ENCODE measurements at regions of chr2 and their contacts with region 1.

Region 1: GRCh38 chr2:112749755-112750559 is 14.5 kb downstream of the CKAP2L start:
- DNase-seq: peak; percentile 92
- ATAC-seq: peak; percentile 85
- H3K4me3 Mint-ChIP-seq: no peak overlapping the region
- H3K27ac Mint-ChIP-seq: no peak overlapping the region
- H3K4me1 Mint-ChIP-seq: peaks cover 12% of the 10 kb centered on the region
- H3K27me3 Mint-ChIP-seq: no peaks in the 10 kb centered on the region

Region 2: DNA sequence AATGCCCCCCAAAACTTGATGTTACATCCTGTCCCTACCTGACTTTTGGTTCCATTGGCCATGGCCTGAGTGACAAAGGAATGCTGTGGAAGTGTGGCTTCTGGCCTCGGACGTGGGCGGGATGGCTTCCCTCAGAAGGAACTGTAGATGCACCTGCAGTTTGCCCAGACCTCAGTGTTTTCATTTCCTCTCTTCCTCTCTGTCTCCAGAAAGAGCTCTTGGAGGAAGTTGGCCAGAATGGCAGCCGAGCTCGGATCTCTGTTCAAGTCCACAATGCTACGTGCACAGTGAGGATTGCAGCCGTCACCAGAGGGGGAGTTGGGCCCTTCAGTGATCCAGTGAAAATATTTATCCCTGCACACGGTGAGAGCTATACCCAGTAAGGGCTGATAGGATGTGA is 755.9 kb before region 1 on chr2:
- CTCF ChIA-PET with region 1: no interaction called
- POLR2A ChIA-PET with region 1: no interaction called
- intact Hi-C with region 1: no loop called
- DNase-seq: no peak
- ATAC-seq: no peak
- H3K4me3 Mint-ChIP-seq: no peak overlapping the region
- H3K27ac Mint-ChIP-seq: no peak overlapping the region
- H3K4me1 Mint-ChIP-seq: no peaks in the 10 kb centered on the region
- H3K27me3 Mint-ChIP-seq: no peaks in the 10 kb centered on the region

Region 3: GRCh38 chr2:112660138-112660537 is 89.8 kb before region 1 on chr2:
- CTCF ChIA-PET with region 1: no interaction called
- POLR2A ChIA-PET with region 1: no interaction called
- intact Hi-C with region 1: no loop called
- DNase-seq: no peak
- ATAC-seq: no peak
- H3K4me3 Mint-ChIP-seq: no peak overlapping the region
- H3K27ac Mint-ChIP-seq: peak overlapping the region; percentile 32
- H3K4me1 Mint-ChIP-seq: peaks cover 52% of the 10 kb centered on the region
- H3K27me3 Mint-ChIP-seq: no peaks in the 10 kb centered on the region

Region 4: GRCh38 chr2:112714836-112715631 is 34.9 kb before region 1 on chr2:
- CTCF ChIA-PET with region 1: no interaction called
- POLR2A ChIA-PET with region 1: no interaction called
- intact Hi-C with region 1: no loop called
- DNase-seq: no peak
- ATAC-seq: no peak
- H3K4me3 Mint-ChIP-seq: no peak overlapping the region
- H3K27ac Mint-ChIP-seq: no peak overlapping the region
- H3K4me1 Mint-ChIP-seq: peaks cover 9% of the 10 kb centered on the region
- H3K27me3 Mint-ChIP-seq: peaks cover 3% of the 10 kb centered on the region

Region 5: GRCh38 chr2:112737542-112738232 is 12.3 kb before region 1 on chr2:
- CTCF ChIA-PET with region 1: interaction called, 35 read pairs
- POLR2A ChIA-PET with region 1: no interaction called
- intact Hi-C with region 1: no loop called
- DNase-seq: no peak
- ATAC-seq: no peak
- H3K4me3 Mint-ChIP-seq: no peak overlapping the region
- H3K27ac Mint-ChIP-seq: no peak overlapping the region
- H3K4me1 Mint-ChIP-seq: peaks cover 4% of the 10 kb centered on the region
- H3K27me3 Mint-ChIP-seq: no peaks in the 10 kb centered on the region

Region 6: GRCh38 chr2:112784199-112785189 is 34.5 kb after region 1 on chr2 and contains the start of gene IL1A:
- CTCF ChIA-PET with region 1: interaction called, 17 read pairs
- POLR2A ChIA-PET with region 1: no interaction called
- intact Hi-C with region 1: no loop called
- DNase-seq: peak; percentile 28
- ATAC-seq: peak; percentile 71
- H3K4me3 Mint-ChIP-seq: peak within 1 kb of the TSS; percentile 22
- H3K27ac Mint-ChIP-seq: no peak within 1 kb of the TSS
- H3K4me1 Mint-ChIP-seq: peaks cover 3% of the 10 kb centered on the region
- H3K27me3 Mint-ChIP-seq: peaks cover 8% of the 10 kb centered on the region
- total RNA-seq, gene IL1A: 6.6 to 6.9 TPM

Region 7: DNA sequence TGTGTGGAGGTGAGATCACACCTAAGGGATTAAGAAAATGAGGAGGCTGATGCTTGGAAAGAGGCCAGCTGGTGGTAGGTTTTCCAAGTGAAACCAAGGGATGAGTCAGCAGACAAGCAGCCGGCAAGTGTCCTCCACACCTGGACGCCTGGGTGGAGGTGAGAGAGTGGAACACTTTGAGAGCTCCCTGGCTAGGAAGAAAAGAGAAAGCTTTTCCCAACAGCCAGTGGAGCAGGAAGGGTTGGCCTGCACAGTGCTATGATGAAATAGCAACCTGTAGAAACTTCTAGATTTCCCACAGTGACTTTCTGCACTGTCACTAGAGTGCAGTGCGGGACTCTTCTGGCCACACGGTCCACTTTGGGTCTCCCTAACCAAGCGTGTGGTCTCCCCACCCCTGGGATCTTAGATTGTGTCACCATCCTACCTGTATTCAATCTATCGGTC is 141.5 kb after region 1 on chr2:
- CTCF ChIA-PET with region 1: interaction called, 98 read pairs
- POLR2A ChIA-PET with region 1: no interaction called
- intact Hi-C with region 1: no loop called
- DNase-seq: no peak
- ATAC-seq: no peak
- H3K4me3 Mint-ChIP-seq: no peak overlapping the region
- H3K27ac Mint-ChIP-seq: no peak overlapping the region
- H3K4me1 Mint-ChIP-seq: no peaks in the 10 kb centered on the region
- H3K27me3 Mint-ChIP-seq: no peaks in the 10 kb centered on the region

Region 8: GRCh38 chr2:112941753-112942658 is 192.0 kb after region 1 on chr2:
- CTCF ChIA-PET with region 1: interaction called, 94 read pairs
- POLR2A ChIA-PET with region 1: interaction called, 4 read pairs
- intact Hi-C with region 1: loop called (anchors 1 kb)
- DNase-seq: peak; percentile 89
- ATAC-seq: peak; percentile 96
- H3K4me3 Mint-ChIP-seq: no peak overlapping the region
- H3K27ac Mint-ChIP-seq: no peak overlapping the region
- H3K4me1 Mint-ChIP-seq: no peaks in the 10 kb centered on the region
- H3K27me3 Mint-ChIP-seq: no peaks in the 10 kb centered on the region